B cell (primary cell): ENCODE measurements at regions of chr17 and their contacts with region 1.

Region 1: DNA sequence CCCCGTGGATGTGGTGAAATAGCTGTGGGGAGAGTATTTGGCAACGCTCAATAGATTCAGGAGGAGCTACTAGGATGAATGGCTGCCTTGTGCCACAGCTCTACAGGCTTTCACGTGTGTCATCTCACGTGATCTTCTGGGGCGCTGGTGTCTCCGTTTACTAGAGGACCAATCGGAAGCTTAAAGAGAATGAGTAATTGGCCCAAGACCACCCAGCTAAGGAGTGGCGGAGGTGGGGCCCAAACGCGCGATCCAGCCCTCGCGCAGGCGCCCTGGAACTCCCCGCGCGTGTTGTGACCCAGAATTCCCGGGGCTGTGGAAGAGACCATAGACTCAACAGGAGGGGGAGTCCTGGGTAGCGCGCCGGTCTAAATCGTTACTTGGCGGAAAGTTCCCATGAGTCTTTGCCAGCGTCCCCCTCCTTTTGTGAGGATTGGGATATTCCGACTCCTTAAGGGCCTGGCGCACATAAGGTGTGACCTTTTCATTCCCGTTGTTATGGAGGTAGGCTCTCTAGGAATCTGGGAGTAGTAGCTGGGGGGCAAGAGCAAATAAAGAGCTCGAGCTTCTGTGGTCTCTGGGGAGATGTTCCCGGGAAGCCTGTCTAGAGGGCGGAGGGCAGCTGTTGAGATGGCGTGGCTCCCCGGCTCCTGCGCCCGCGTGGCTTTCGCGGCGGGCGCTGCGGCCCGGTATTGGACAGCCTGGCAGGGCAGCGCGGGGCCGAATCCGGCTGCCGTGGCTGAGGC is 23.4 kb downstream of the TRPV2 start:
- DNase-seq: peak; percentile 97
- ATAC-seq: peak; percentile 84
- H3K4me3 ChIP-seq: peak overlapping the region; percentile 87 to 94 (median 88)
- H3K4me3 Mint-ChIP-seq: peak overlapping the region; percentile 99
- H3K27ac ChIP-seq: peak overlapping the region; percentile 68 to 92
- H3K27ac Mint-ChIP-seq: peak overlapping the region; percentile 96
- H3K4me1 ChIP-seq: peaks cover 16 to 26% of the 10 kb centered on the region in 2 donors
- H3K4me1 Mint-ChIP-seq: peaks cover 43% of the 10 kb centered on the region
- H3K27me3 ChIP-seq: no peaks in the 10 kb centered on the region
- H3K27me3 Mint-ChIP-seq: no peaks in the 10 kb centered on the region
- CTCF ChIP-seq: no peak

Region 2: GRCh38 chr17:16215273-16215964 is 223.3 kb before region 1 on chr17 and contains the start of gene NCOR1:
- CTCF ChIA-PET with region 1: no interaction called
- POLR2A ChIA-PET with region 1: interaction called, 6 read pairs
- intact Hi-C with region 1: loop called (anchors 5 kb)
- DNase-seq: peak; percentile 92
- ATAC-seq: peak; percentile 85
- H3K4me3 ChIP-seq: peak within 1 kb of the TSS; percentile 77 to 93 (median 92)
- H3K4me3 Mint-ChIP-seq: peak within 1 kb of the TSS; percentile 96
- H3K27ac ChIP-seq: peak within 1 kb of the TSS; percentile 78 to 90
- H3K27ac Mint-ChIP-seq: peak within 1 kb of the TSS; percentile 91
- H3K4me1 ChIP-seq: peaks cover 25 to 35% of the 10 kb centered on the region in 2 donors
- H3K4me1 Mint-ChIP-seq: peaks cover 43% of the 10 kb centered on the region
- H3K27me3 ChIP-seq: no peaks in the 10 kb centered on the region
- H3K27me3 Mint-ChIP-seq: no peaks in the 10 kb centered on the region
- CTCF ChIP-seq: peak; percentile 44
- total RNA-seq, gene NCOR1: 217 and 229 TPM in 2 replicates

Region 3: GRCh38 chr17:16363749-16364536 is 74.8 kb before region 1 on chr17:
- CTCF ChIA-PET with region 1: interaction called, 10 read pairs
- POLR2A ChIA-PET with region 1: interaction called, 4 read pairs
- intact Hi-C with region 1: no loop called
- DNase-seq: peak; percentile 81
- ATAC-seq: peak; percentile 99
- H3K4me3 ChIP-seq: no peak overlapping the region
- H3K4me3 Mint-ChIP-seq: no peak overlapping the region
- H3K27ac ChIP-seq: no peak overlapping the region
- H3K27ac Mint-ChIP-seq: no peak overlapping the region
- H3K4me1 ChIP-seq: peaks cover 0 to 4% of the 10 kb centered on the region in 2 donors
- H3K4me1 Mint-ChIP-seq: no peaks in the 10 kb centered on the region
- H3K27me3 ChIP-seq: no peaks in the 10 kb centered on the region
- H3K27me3 Mint-ChIP-seq: no peaks in the 10 kb centered on the region
- CTCF ChIP-seq: peak; percentile 97

Region 4: GRCh38 chr17:16415031-16415924 is 23.5 kb before region 1 on chr17 and contains the start of gene TRPV2:
- CTCF ChIA-PET with region 1: interaction called, 19 read pairs
- POLR2A ChIA-PET with region 1: interaction called, 6 read pairs
- intact Hi-C with region 1: loop called (anchors 1 kb)
- DNase-seq: peak; percentile 73
- ATAC-seq: peak; percentile 47
- H3K4me3 ChIP-seq: peak within 1 kb of the TSS; percentile 53 to 86 (median 67)
- H3K4me3 Mint-ChIP-seq: peak within 1 kb of the TSS; percentile 98
- H3K27ac ChIP-seq: peak within 1 kb of the TSS; percentile 94 to 98
- H3K27ac Mint-ChIP-seq: peak within 1 kb of the TSS; percentile 95
- H3K4me1 ChIP-seq: peaks cover 27 to 48% of the 10 kb centered on the region in 2 donors
- H3K4me1 Mint-ChIP-seq: peaks cover 42% of the 10 kb centered on the region
- H3K27me3 ChIP-seq: no peaks in the 10 kb centered on the region
- H3K27me3 Mint-ChIP-seq: no peaks in the 10 kb centered on the region
- CTCF ChIP-seq: peak; percentile 64
- total RNA-seq, gene TRPV2: 58.6 TPM in 2 replicates

Region 5: GRCh38 chr17:16449121-16449570 is 10.4 kb after region 1 on chr17:
- CTCF ChIA-PET with region 1: interaction called, 13 read pairs
- POLR2A ChIA-PET with region 1: interaction called, 12 read pairs
- intact Hi-C with region 1: no loop called
- DNase-seq: no peak
- ATAC-seq: no peak
- H3K4me3 ChIP-seq: no peak overlapping the region
- H3K4me3 Mint-ChIP-seq: no peak overlapping the region
- H3K27ac ChIP-seq: no peak overlapping the region
- H3K27ac Mint-ChIP-seq: no peak overlapping the region
- H3K4me1 ChIP-seq: no peaks in the 10 kb centered on the region
- H3K4me1 Mint-ChIP-seq: peaks cover 3% of the 10 kb centered on the region
- H3K27me3 ChIP-seq: no peaks in the 10 kb centered on the region
- H3K27me3 Mint-ChIP-seq: no peaks in the 10 kb centered on the region
- CTCF ChIP-seq: no peak

Region 6: GRCh38 chr17:16589097-16589969 is 150.6 kb after region 1 on chr17:
- CTCF ChIA-PET with region 1: interaction called, 3 read pairs
- POLR2A ChIA-PET with region 1: no interaction called
- intact Hi-C with region 1: loop called (anchors 1 kb)
- DNase-seq: peak; percentile 92
- ATAC-seq: peak; percentile 98
- H3K4me3 ChIP-seq: peak overlapping the region; percentile 38 to 66 (median 56)
- H3K4me3 Mint-ChIP-seq: peak overlapping the region; percentile 82
- H3K27ac ChIP-seq: no peak overlapping the region
- H3K27ac Mint-ChIP-seq: no peak overlapping the region
- H3K4me1 ChIP-seq: peaks cover 12 to 15% of the 10 kb centered on the region in 2 donors
- H3K4me1 Mint-ChIP-seq: peaks cover 8% of the 10 kb centered on the region
- H3K27me3 ChIP-seq: peaks cover 0 to 30% (median 14%) of the 10 kb centered on the region in 4 experiments
- H3K27me3 Mint-ChIP-seq: peaks cover 51% of the 10 kb centered on the region
- CTCF ChIP-seq: peak; percentile 97